Activated CD8-positive, alpha-beta T cell treated with anti-CD3 and anti-CD28 coated beads, Interleukin-2, amount 10 ng/mL, durations not matched to agents 7 days and 5 days (primary cell): ENCODE measurements at regions of chr16 and their contacts with region 1.

Region 1: GRCh38 chr16:50665128-50665878 is 15.8 kb downstream of the SNX20 start:
- DNase-seq: peak; percentile 91
- ATAC-seq: peak; percentile 56
- H3K4me3 Mint-ChIP-seq: peak overlapping the region; percentile 64
- H3K27ac Mint-ChIP-seq: peak overlapping the region; percentile 87
- H3K4me1 Mint-ChIP-seq: peaks cover 49% of the 10 kb centered on the region
- H3K27me3 Mint-ChIP-seq: no peaks in the 10 kb centered on the region

Region 2: GRCh38 chr16:50065624-50066481 is 599.5 kb before region 1 on chr16 and contains the start of gene HEATR3:
- CTCF ChIA-PET with region 1: interaction called, 10 read pairs
- POLR2A ChIA-PET with region 1: no interaction called
- DNase-seq: peak; percentile 95
- ATAC-seq: peak; percentile 92
- H3K4me3 Mint-ChIP-seq: peak within 1 kb of the TSS; percentile 90
- H3K27ac Mint-ChIP-seq: peak within 1 kb of the TSS; percentile 94
- H3K4me1 Mint-ChIP-seq: peaks cover 39% of the 10 kb centered on the region
- H3K27me3 Mint-ChIP-seq: peaks cover 3% of the 10 kb centered on the region
- total RNA-seq, gene HEATR3: 29.7 to 31.7 TPM

Region 3: DNA sequence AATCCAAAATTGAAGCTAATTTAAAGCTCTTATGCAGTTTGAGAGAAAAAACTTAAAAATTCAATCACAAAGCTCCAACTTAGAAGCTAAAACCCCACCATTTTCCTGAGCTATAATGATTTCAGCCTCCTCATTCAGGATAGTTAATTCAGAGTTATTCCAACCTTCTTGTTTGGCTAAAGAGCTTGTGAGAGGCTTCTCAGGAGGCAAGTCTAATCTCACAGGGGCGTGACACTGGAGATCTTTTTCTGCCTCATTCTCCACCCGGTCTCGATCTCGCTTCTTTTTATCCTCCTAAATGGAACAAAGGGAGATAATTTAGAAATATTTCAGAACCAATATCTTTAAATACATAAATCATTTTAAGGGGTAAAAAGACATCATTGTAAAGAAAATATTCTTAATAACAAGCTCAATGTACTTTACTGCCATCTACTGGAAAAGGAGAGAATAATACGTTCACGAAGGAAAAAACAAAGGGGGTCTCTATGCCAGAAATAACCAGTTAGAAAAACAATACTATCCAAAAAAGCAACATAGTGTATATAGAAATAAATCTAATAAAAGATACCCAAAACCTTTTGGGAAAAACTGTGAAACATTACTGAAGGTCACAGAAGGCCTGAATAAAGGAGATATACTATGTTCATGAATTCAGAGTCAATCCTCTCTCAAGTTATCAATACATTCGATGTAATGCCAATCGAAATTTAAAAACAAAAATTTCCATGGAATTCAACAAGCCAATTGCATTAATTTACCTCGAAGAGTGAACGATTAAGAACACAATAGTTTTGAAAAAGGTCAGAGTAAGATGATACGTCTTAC is 310.5 kb before region 1 on chr16:
- CTCF ChIA-PET with region 1: interaction called, 61 read pairs
- POLR2A ChIA-PET with region 1: no interaction called
- DNase-seq: no peak
- ATAC-seq: no peak
- H3K4me3 Mint-ChIP-seq: no peak overlapping the region
- H3K27ac Mint-ChIP-seq: no peak overlapping the region
- H3K4me1 Mint-ChIP-seq: peaks cover 30% of the 10 kb centered on the region
- H3K27me3 Mint-ChIP-seq: no peaks in the 10 kb centered on the region

Region 4: GRCh38 chr16:50573947-50574744 is 91.2 kb before region 1 on chr16:
- CTCF ChIA-PET with region 1: no interaction called
- POLR2A ChIA-PET with region 1: no interaction called
- DNase-seq: no peak
- ATAC-seq: no peak
- H3K4me3 Mint-ChIP-seq: no peak overlapping the region
- H3K27ac Mint-ChIP-seq: no peak overlapping the region
- H3K4me1 Mint-ChIP-seq: no peaks in the 10 kb centered on the region
- H3K27me3 Mint-ChIP-seq: peaks cover 2% of the 10 kb centered on the region

Region 5: GRCh38 chr16:50588276-50588675 is 77.0 kb before region 1 on chr16:
- CTCF ChIA-PET with region 1: interaction called, 12 read pairs
- POLR2A ChIA-PET with region 1: interaction called, 3 read pairs
- DNase-seq: no peak
- ATAC-seq: no peak
- H3K4me3 Mint-ChIP-seq: no peak overlapping the region
- H3K27ac Mint-ChIP-seq: no peak overlapping the region
- H3K4me1 Mint-ChIP-seq: peaks cover 20% of the 10 kb centered on the region
- H3K27me3 Mint-ChIP-seq: no peaks in the 10 kb centered on the region

Region 6: DNA sequence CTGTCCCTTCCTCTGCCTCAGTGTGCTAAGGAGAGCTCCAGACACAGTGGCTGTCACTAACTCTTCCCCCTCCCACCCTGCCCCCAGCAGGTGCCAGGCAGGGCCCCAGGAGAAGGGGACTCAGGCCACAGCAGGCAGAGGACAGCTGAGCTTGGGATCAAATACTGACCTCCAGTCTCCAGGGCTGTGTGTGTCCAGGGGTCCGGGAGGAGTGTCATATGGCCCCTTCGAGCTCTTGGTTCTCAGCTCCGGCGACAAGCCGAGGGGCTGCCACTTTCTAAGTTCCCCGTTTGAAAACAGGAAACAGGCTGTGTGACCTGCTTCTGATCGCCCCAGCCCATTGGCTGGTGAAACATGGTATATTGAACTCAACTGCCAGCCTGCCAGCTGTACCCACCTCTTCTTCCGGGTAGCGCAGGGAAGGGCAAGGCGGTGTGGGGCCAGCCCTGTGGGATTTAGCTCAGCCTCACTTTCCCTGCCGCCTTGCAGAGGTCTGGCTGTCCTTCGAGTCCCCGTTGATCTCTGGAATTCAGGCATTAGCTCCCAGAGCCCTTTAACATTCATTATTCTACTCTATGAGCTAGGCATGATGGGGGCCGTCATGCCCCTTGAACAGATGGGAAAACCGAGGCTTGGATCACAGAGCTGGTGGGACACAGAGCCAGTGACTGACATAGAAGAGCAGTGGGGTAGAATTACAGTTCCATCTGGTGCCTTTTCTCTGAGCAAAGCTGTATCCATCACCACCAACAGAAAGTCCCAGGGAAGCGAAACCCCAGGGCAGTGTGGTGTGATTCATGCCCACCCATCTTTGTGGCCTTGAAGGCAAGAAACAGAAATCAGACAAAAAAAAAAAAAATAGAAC is 15.9 kb after region 1 on chr16 and contains the start of gene SNX20:
- CTCF ChIA-PET with region 1: interaction called, 177 read pairs
- POLR2A ChIA-PET with region 1: interaction called, 61 read pairs
- DNase-seq: peak; percentile 77
- ATAC-seq: peak; percentile 81
- H3K4me3 Mint-ChIP-seq: peak within 1 kb of the TSS; percentile 82
- H3K27ac Mint-ChIP-seq: peak within 1 kb of the TSS; percentile 89
- H3K4me1 Mint-ChIP-seq: peaks cover 84% of the 10 kb centered on the region
- H3K27me3 Mint-ChIP-seq: no peaks in the 10 kb centered on the region
- total RNA-seq, gene SNX20: 64.8 to 65.3 TPM

Region 7: DNA sequence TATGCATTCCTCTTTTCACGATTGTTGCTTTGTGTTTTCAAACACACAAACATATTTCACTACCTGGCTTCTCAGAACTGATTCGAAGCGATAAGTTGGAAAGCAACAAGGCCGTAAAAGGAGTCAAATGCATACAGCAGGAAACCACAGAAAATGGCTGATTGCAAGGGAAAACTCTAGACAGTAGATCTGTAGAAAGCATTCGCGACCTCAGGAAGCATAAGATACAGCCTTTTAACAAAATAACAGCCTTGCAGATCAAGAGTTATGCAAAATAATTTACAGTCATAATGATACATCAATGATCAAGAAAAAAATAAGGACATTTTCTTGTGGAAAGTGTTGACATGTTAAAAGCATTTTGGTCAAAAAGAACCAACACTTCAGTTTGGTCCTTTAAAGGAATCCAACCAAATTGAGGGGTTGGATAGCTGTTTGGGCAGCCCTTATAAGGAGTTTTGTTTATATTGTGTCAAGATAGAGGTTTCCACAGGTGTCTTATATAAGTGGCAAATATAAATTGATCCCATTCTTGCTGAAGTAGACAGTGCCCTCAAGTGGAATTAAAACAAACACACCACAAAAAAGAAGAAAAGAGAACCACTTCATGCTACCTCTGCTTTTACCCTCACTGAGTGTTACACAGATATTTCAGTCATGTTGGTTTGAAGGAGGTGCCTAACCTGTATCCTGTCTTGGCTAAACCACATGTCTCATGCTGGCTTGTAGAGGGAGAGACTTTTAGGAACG is 82.1 kb after region 1 on chr16:
- CTCF ChIA-PET with region 1: interaction called, 567 read pairs
- POLR2A ChIA-PET with region 1: interaction called, 58 read pairs
- DNase-seq: peak; percentile 61
- ATAC-seq: peak; percentile 72
- H3K4me3 Mint-ChIP-seq: peak overlapping the region; percentile 80
- H3K27ac Mint-ChIP-seq: peak overlapping the region; percentile 95
- H3K4me1 Mint-ChIP-seq: peaks cover 61% of the 10 kb centered on the region
- H3K27me3 Mint-ChIP-seq: no peaks in the 10 kb centered on the region